ENCODE measurements at regions of chr19 and their contacts with region 1.

Region 1: GRCh38 chr19:42396381-42397262 is 6.5 kb upstream of the CNFN start:
- DNase-seq: peak; percentile 99
- H3K4me3 ChIP-seq: peak overlapping the region; percentile 55 to 62 (median 60)
- H3K27ac ChIP-seq: peak overlapping the region; percentile 82 to 85 (median 84)
- H3K4me1 ChIP-seq: peaks cover 17 to 29% (median 27%) of the 10 kb centered on the region in 4 donors
- H3K27me3 ChIP-seq: peaks cover 0 to 1% (median 0%) of the 10 kb centered on the region in 4 donors
- CTCF ChIP-seq: peak in 1 of 3 experiments; percentile 30
- EP300 ChIP-seq: no peak
- POLR2A ChIP-seq: peak; percentile 72

Region 2: DNA sequence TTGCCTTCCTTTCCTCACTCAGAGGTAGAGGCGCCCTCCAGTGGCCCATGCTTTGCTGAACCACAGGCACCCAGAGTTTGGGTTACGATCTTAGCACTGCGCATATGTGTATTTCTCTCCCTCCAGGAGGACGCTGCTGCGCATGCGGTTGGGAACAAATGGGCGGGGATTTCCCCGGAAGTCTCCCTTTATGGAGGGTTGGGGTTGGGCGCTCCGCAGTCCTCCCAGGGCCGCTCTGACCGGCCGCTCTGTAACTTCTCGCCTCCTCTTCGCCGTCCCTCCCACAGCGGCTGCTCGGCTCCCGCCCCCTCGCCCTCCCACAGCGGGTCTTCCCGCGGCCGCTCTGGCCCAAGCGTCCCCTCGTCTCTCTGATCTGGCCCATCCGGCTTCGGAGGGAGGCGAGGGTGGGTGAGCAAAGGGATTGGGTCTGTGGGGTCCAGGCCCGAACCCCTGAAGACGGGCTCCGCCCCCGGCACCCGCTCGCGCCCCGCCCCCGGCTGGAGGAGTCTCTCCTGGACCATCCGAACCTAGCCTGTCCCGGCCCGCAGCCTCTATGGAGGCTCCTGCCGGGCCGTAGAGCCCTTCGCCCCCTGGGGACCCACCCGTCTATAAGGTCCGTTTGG is 71.2 kb before region 1 on chr19 and contains the start of gene MEGF8:
- intact Hi-C with region 1: loop called (anchors 5 kb)
- DNase-seq: peak; percentile 99
- H3K4me3 ChIP-seq: peak within 1 kb of the TSS; percentile 89 to 97 (median 92)
- H3K27ac ChIP-seq: peak within 1 kb of the TSS; percentile 76 to 81 (median 80)
- H3K4me1 ChIP-seq: peaks cover 31 to 47% (median 43%) of the 10 kb centered on the region in 4 donors
- H3K27me3 ChIP-seq: peaks cover 9 to 33% (median 19%) of the 10 kb centered on the region in 4 donors
- CTCF ChIP-seq: peak; percentile 85 to 92 (median 91)
- EP300 ChIP-seq: no peak
- POLR2A ChIP-seq: no peak
- total RNA-seq, gene MEGF8: 18.2 to 46.2 (median 25.5) TPM

Measured in esophagus muscularis mucosa (tissue), 4 donors.